Activated naive CD4-positive, alpha-beta T cell treated with anti-CD3 and anti-CD28 coated beads for 36 hours (primary cell): ENCODE measurements at regions of chrX and their contacts with region 1.

Region 1: GRCh38 chrX:17689971-17690409 is 47.3 kb upstream of the SCML1 start:
- DNase-seq: peak; percentile 69
- H3K4me3 Mint-ChIP-seq: no peak overlapping the region
- H3K27ac Mint-ChIP-seq: no peak overlapping the region
- H3K4me1 Mint-ChIP-seq: peaks cover 6% of the 10 kb centered on the region
- H3K27me3 Mint-ChIP-seq: no peaks in the 10 kb centered on the region

Region 2: GRCh38 chrX:17242470-17242869 is 447.5 kb before region 1 on chrX:
- CTCF ChIA-PET with region 1: interaction called, 9 read pairs
- intact Hi-C with region 1: loop called (anchors 1 kb)
- DNase-seq: peak; percentile 59
- H3K4me3 Mint-ChIP-seq: no peak overlapping the region
- H3K27ac Mint-ChIP-seq: no peak overlapping the region
- H3K4me1 Mint-ChIP-seq: no peaks in the 10 kb centered on the region
- H3K27me3 Mint-ChIP-seq: no peaks in the 10 kb centered on the region